SK-N-SH (cell line): ENCODE measurements at regions of chr3 and their contacts with region 1.

Region 1: GRCh38 chr3:47412842-47413520 is 32.2 kb downstream of the PTPN23 start:
- DNase-seq: no peak
- H3K4me3 ChIP-seq: no peak overlapping the region
- H3K27ac ChIP-seq: no peak overlapping the region
- H3K4me1 ChIP-seq: peaks cover 0 to 11% of the 10 kb centered on the region in 2 experiments; a peak in 1 of 4 replicates
- H3K27me3 ChIP-seq: no peaks in the 10 kb centered on the region
- CTCF ChIP-seq: no peak
- EP300 ChIP-seq: no peak
- RAD21 ChIP-seq: no peak

Region 2: DNA sequence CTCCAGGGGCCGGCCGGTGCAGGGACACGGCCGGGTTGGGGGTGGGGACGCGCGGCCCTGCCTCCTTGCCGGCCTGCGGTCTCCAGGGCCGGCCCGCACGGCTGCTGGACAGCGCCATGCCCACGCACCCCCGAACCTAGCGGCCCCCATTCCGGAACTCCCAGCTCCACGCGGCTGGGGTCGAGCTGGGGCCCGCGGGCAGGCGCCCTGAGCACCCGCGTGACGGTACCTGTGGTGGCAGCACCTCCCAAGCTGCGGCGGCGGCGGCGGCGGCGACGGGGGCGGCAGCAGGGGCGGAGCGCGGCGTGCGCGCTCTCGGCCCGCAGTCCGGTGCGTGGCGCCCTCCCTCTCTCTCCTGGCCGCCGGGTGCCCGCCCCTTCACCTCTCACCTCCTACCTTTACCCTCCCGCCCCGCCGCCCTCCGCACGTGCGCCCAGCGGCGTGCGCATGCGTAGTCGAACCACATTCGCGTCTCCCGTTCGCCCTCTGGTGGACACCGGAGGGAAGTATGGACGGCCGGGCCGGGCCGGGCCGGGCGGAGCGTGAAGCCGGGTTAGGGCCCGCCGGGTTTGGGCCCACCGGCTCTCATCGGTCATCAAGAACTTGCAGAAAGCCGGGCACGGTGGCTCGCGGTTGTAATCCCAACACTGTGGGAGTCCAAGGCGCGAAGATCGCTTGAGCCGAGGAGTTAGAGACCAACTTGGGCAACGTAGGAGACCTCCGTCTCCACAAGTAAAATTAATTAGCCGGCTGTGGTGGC is 62.8 kb after region 1 on chr3 and contains the start of gene SCAP:
- CTCF ChIA-PET with region 1: interaction called, 11 read pairs
- POLR2A ChIA-PET with region 1: no interaction called
- DNase-seq: peak; percentile 98
- H3K4me3 ChIP-seq: peak within 1 kb of the TSS; percentile 74 to 98
- H3K27ac ChIP-seq: peak within 1 kb of the TSS; percentile 60 to 66
- H3K4me1 ChIP-seq: peaks cover 0 to 5% of the 10 kb centered on the region in 2 experiments; a peak in 1 of 4 replicates
- H3K27me3 ChIP-seq: no peaks in the 10 kb centered on the region
- CTCF ChIP-seq: peak; percentile 79
- EP300 ChIP-seq: no peak; a peak in 1 of 4 replicates
- RAD21 ChIP-seq: peak; percentile 57
- polyA plus RNA-seq, gene SCAP: 22.2 and 28.0 TPM in 2 replicates